Thyroid gland (tissue), 4 donors: ENCODE measurements at regions of chr12 and their contacts with region 1.

Region 1: DNA sequence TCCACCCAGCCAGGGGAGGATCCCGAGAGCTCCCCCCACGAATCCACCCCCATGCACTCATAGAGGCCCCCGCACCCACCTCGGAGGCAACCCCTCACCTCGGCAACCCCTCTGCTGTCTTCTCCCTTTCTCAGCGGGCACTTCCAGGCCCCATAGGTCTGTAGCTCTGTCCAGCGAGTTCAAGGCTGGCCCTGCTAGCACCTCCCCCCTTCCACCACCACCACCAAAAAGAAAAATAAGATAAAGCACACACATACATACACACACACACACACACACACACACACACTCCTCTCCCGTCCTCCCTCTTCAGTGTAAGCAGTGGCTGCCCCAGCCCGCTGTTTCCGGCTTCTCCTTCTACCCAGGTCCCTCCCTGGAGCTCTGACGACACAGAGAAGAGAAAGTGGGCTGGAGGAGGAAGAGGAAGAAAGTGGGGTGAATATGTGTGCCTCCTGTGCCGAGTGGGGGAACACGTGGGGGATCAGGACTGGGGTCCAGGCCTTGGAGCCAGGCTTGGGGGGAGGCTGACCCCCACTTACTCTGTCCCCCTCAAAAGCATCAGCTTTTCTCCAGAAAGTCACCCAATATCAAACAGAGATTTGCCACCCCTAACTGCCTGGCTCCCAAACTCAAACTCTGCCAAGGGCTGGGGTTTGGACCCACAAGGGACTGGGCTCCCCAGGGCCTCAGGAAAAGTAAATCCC is at the start of gene STAT6:
- DNase-seq: peak; percentile 80 to 82
- H3K4me3 ChIP-seq: peak within 1 kb of the TSS; percentile 22 to 74 (median 47)
- H3K27ac ChIP-seq: peak within 1 kb of the TSS; percentile 96 to 99 (median 99)
- H3K4me1 ChIP-seq: peaks cover 7 to 27% of the 10 kb centered on the region in 2 donors
- H3K27me3 ChIP-seq: no peaks in the 10 kb centered on the region
- CTCF ChIP-seq: peak in 1 of 6 experiments; percentile 20
- POLR2A ChIP-seq: peak; percentile 20 to 45
- total RNA-seq, gene STAT6: 79.0 to 144 (median 89.8) TPM

Region 2: DNA sequence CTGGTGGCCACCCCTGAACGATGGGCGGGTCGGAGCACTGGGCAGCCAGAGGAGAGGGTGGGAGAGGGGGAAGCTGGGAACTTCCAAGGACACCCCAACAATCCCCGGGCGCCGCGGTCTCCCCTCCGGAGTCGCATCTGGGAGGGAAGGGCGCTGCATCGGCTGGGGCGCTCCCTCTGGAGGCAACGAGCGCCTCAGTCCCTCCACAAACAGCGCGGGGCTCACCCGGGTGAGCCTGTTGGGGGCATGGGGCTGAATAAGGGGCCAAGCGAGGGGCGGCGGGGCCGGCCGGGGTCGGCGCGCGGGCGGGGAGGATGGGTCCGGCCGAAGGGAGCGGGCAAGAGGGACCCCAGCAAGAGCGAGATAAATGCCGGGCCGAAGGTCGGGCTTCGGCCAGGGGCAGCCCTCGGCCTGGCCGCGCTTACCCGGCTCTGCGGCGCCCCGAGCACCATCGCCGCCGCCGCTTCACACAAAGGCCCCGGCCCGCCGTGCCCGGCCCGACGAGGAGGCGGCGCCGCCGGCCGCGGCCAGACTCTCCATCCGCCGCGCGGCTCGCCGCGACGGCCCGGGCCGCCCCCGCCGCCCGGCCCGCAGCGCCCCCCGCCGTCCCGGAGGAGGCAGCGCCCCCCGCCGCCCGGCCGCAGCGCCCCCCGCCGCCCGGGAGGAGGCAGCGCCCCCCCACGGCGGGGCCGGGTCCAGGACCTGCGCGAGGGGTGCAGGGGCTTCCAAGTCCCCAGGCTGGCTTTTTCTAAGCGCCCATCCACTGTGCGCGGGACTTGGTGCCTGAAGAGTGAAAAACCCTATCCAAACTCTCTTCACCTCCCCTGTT is 105.0 kb before region 1 on chr12 and contains the start of gene ZBTB39:
- intact Hi-C with region 1: loop called (anchors 10 kb)
- DNase-seq: peak; percentile 59 to 60
- H3K4me3 ChIP-seq: peak within 1 kb of the TSS; percentile 54 to 95 (median 74)
- H3K27ac ChIP-seq: peak within 1 kb of the TSS; percentile 18 to 89 (median 65)
- H3K4me1 ChIP-seq: peaks cover 12 to 16% of the 10 kb centered on the region in 2 donors
- H3K27me3 ChIP-seq: no peaks in the 10 kb centered on the region
- CTCF ChIP-seq: peak in 4 of 6 experiments; percentile 10 to 61 (median 34)
- POLR2A ChIP-seq: peak in 1 of 2 donors; percentile 19
- total RNA-seq, gene ZBTB39: 4.5 to 8.5 (median 7.4) TPM

Region 3: DNA sequence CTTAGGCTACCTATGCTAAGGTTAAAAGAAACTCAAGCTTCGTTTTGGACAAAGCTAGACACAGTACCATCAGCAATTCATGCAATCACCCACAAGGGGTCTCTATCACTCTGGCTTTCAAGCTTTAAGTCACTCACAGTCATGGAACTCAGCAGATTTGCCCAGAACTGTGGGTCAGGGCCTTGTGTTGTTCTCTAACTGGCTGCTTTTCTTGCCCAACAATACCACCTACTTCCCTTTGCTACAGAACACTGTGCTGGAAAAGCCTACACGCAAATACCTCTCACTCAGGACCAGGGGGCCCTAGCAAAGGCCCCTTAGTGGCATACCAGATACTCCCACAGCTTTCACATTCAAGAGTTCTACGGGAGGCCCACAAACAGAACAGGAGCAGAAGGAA is 41.7 kb before region 1 on chr12:
- intact Hi-C with region 1: loop called (anchors 5 kb)
- DNase-seq: peak; percentile 64 to 68
- H3K4me3 ChIP-seq: no peak overlapping the region
- H3K27ac ChIP-seq: peak overlapping the region in 2 of 3 donors; percentile 39 to 47
- H3K4me1 ChIP-seq: peaks cover 0 to 4% of the 10 kb centered on the region in 2 donors
- H3K27me3 ChIP-seq: no peaks in the 10 kb centered on the region
- CTCF ChIP-seq: peak; percentile 44 to 96 (median 87)
- POLR2A ChIP-seq: no peak

Region 4: GRCh38 chr12:57213058-57213715 is 102.0 kb after region 1 on chr12:
- intact Hi-C with region 1: no loop called
- DNase-seq: peak; percentile 86
- H3K4me3 ChIP-seq: no peak overlapping the region
- H3K27ac ChIP-seq: no peak overlapping the region
- H3K4me1 ChIP-seq: peaks cover 8 to 30% of the 10 kb centered on the region in 2 donors
- H3K27me3 ChIP-seq: peaks cover 6% of the 10 kb centered on the region
- CTCF ChIP-seq: peak; percentile 87 to 98 (median 94)
- POLR2A ChIP-seq: no peak

Region 5: DNA sequence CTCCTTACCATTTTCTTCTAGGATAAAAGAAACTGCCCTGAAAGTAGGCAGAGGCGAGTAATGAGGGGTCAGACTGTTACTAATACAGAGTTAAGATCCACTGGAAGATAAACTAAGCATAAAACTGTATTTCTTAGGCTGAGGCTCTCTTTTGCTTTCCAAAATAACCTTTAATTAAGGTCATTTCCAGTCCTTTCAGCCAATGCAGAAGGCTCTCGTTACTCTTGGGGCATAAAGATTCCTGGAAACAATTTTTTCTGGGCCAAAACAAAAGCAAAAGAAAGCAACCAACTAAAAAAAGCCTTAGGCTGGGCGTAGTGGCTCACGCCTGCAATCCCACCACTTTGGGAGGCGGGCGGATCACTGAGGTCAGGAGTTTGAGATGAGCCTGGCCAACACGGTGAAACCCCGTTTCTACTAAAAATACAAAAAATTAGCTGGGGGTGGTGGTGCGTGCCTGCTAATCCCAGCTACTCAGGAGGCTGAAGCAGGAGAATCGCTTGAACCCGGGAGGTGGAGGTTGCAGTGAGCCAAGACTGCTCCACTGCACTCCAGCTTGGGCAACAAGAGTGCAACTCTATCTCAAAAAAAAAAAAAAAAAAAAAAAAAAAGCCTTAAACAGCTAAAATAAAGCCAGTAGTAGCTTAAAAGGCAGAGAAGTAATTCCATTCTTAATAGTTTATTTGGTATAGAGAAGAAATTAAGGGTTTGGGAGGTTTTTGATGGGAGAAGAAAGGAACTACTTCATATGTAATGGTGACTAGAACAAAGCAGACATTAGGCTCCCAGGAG is 208.7 kb after region 1 on chr12:
- intact Hi-C with region 1: no loop called
- DNase-seq: no peak
- H3K4me3 ChIP-seq: no peak overlapping the region
- H3K27ac ChIP-seq: no peak overlapping the region
- H3K4me1 ChIP-seq: peaks cover 0 to 7% of the 10 kb centered on the region in 2 donors
- H3K27me3 ChIP-seq: no peaks in the 10 kb centered on the region
- CTCF ChIP-seq: no peak
- POLR2A ChIP-seq: no peak